Endothelial cell of umbilical vein (primary cell): ENCODE measurements at regions of chr13 and their contacts with region 1.

Region 1: GRCh38 chr13:97030705-97031452 is 36.6 kb upstream of the OXGR1 start:
- DNase-seq: peak; percentile 76
- H3K4me3 ChIP-seq: no peak overlapping the region
- H3K27ac ChIP-seq: no peak overlapping the region
- H3K4me1 ChIP-seq: peaks cover 19% of the 10 kb centered on the region
- H3K27me3 ChIP-seq: no peaks in the 10 kb centered on the region
- CTCF ChIP-seq: peak; percentile 29 to 33
- POLR2A ChIP-seq: no peak

Region 2: GRCh38 chr13:96822895-96823294 is 208.0 kb before region 1 on chr13:
- CTCF ChIA-PET with region 1: no interaction called
- POLR2A ChIA-PET with region 1: no interaction called
- dilution Hi-C with region 1: no loop called
- intact Hi-C with region 1: loop called (anchors 1 kb)
- DNase-seq: peak; percentile 9
- H3K4me3 ChIP-seq: no peak overlapping the region
- H3K27ac ChIP-seq: no peak overlapping the region
- H3K4me1 ChIP-seq: no peaks in the 10 kb centered on the region
- H3K27me3 ChIP-seq: no peaks in the 10 kb centered on the region
- CTCF ChIP-seq: peak; percentile 21 to 38
- POLR2A ChIP-seq: no peak

Region 3: DNA sequence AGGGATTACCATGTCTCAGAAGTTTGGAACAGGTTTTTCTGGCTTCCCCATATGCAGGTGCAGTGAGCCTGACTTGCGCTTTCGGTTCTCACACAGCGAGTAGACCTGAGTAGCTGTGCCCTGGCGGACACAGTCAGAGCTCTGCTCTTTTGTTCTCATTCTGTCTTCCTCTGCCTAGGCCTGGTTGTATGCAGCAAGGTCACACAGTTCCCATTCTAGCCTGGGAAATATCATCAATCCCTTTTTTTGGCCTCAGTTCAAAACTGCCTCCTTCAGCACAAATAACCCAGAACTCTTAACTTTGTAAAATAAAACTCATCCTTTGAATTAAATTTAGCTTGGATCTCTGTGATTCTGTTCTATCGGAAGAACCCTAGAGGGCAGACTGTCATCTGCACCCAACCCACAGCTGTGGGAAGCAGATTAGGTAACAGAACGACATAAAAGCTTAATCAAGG is 46.8 kb before region 1 on chr13:
- CTCF ChIA-PET with region 1: no interaction called
- POLR2A ChIA-PET with region 1: no interaction called
- dilution Hi-C with region 1: no loop called
- intact Hi-C with region 1: loop called (anchors 1 kb)
- DNase-seq: peak; percentile 75
- H3K4me3 ChIP-seq: peak overlapping the region in 1 of 3 experiments; percentile 29
- H3K27ac ChIP-seq: no peak overlapping the region
- H3K4me1 ChIP-seq: peaks cover 21% of the 10 kb centered on the region
- H3K27me3 ChIP-seq: peaks cover 17 to 18% of the 10 kb centered on the region in 2 experiments
- CTCF ChIP-seq: peak in 1 of 2 donors; percentile 12
- POLR2A ChIP-seq: no peak

Region 4: GRCh38 chr13:97100821-97101220 is 69.9 kb after region 1 on chr13:
- CTCF ChIA-PET with region 1: no interaction called
- POLR2A ChIA-PET with region 1: no interaction called
- dilution Hi-C with region 1: no loop called
- intact Hi-C with region 1: no loop called
- DNase-seq: no peak
- H3K4me3 ChIP-seq: no peak overlapping the region
- H3K27ac ChIP-seq: no peak overlapping the region
- H3K4me1 ChIP-seq: no peaks in the 10 kb centered on the region
- H3K27me3 ChIP-seq: no peaks in the 10 kb centered on the region
- CTCF ChIP-seq: no peak
- POLR2A ChIP-seq: no peak

Region 5: DNA sequence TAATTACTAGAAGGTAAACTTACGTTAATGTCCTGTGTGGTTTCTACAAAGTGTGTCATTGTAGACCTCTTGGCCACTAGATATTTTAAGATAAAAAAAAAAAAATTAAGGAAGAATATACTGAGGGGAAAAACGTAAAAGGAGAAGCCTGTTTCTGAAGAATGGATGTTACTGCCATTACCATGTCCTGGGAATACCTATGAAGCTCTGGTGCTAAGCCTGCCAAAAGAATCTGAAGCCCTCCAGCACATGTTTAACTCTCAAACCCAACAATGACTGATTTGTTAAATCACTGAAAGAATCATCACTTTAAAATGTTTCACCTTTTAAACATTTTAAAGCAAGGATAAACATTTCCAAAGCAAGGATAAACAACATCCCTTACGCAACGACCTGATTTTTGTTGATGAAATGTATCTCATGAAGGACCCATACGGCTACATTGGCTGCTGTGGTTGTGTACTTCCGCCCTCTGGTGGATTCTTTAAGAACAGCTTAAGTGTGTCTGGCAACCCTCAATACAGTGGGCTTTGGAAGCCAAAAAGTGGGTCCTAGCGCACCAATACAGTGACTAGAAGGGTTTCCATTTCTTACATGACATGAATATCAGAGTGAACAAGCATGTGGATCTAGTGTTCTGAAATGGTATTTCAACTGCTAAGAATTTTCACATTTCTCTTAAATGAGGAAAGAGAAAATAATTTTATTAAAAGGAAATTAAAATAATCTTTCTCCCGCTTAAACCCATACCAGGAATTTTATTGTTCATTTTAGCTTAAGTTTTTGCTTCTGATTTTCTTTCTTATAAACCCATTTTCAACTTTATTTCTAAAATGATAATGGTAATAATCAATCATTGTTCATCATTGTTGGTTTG is 328.5 kb after region 1 on chr13:
- CTCF ChIA-PET with region 1: interaction called, 5 read pairs
- POLR2A ChIA-PET with region 1: no interaction called
- dilution Hi-C with region 1: no loop called
- intact Hi-C with region 1: loop called (anchors 1 kb)
- DNase-seq: peak; percentile 81
- H3K4me3 ChIP-seq: no peak overlapping the region
- H3K27ac ChIP-seq: peak overlapping the region; percentile 20
- H3K4me1 ChIP-seq: no peaks in the 10 kb centered on the region
- H3K27me3 ChIP-seq: no peaks in the 10 kb centered on the region
- CTCF ChIP-seq: peak; percentile 66 to 80
- POLR2A ChIP-seq: no peak